Dendritic cell treated with granulocyte-macrophage colony-stimulating factor and Interleukin-4, amounts not matched to agents 40 ng/mL and 50 ng/mL, for 4 days (primary cell): ENCODE measurements at regions of chr9 and their contacts with region 1.

Region 1: GRCh38 chr9:137590462-137591383 is at the start of gene ZMYND19:
- H3K4me3 Mint-ChIP-seq: peak within 1 kb of the TSS; percentile 100
- H3K27ac Mint-ChIP-seq: peak within 1 kb of the TSS; percentile 94
- H3K4me1 Mint-ChIP-seq: peaks cover 38% of the 10 kb centered on the region
- H3K27me3 Mint-ChIP-seq: no peaks in the 10 kb centered on the region

Region 2: GRCh38 chr9:137551651-137552384 is 38.9 kb before region 1 on chr9 and contains the start of gene MRPL41:
- intact Hi-C with region 1: loop called (anchors 5 kb)
- H3K4me3 Mint-ChIP-seq: peak within 1 kb of the TSS; percentile 85
- H3K27ac Mint-ChIP-seq: peak within 1 kb of the TSS; percentile 85
- H3K4me1 Mint-ChIP-seq: peaks cover 28% of the 10 kb centered on the region
- H3K27me3 Mint-ChIP-seq: peaks cover 3% of the 10 kb centered on the region

Region 3: GRCh38 chr9:137605121-137606004 is 14.6 kb after region 1 on chr9 and contains the start of gene ARRDC1:
- intact Hi-C with region 1: loop called (anchors 1 kb)
- H3K4me3 Mint-ChIP-seq: peak within 1 kb of the TSS; percentile 73
- H3K27ac Mint-ChIP-seq: peak within 1 kb of the TSS; percentile 90
- H3K4me1 Mint-ChIP-seq: peaks cover 65% of the 10 kb centered on the region
- H3K27me3 Mint-ChIP-seq: no peaks in the 10 kb centered on the region

Region 4: GRCh38 chr9:137618105-137619067 is 27.7 kb after region 1 on chr9 and contains the start of gene EHMT1:
- intact Hi-C with region 1: loop called (anchors 1 kb)
- H3K4me3 Mint-ChIP-seq: peak within 1 kb of the TSS; percentile 86
- H3K27ac Mint-ChIP-seq: peak within 1 kb of the TSS; percentile 91
- H3K4me1 Mint-ChIP-seq: peaks cover 51% of the 10 kb centered on the region
- H3K27me3 Mint-ChIP-seq: no peaks in the 10 kb centered on the region

Region 5: GRCh38 chr9:137694967-137695879 is 104.5 kb after region 1 on chr9:
- intact Hi-C with region 1: loop called (anchors 10 kb)
- H3K4me3 Mint-ChIP-seq: no peak overlapping the region
- H3K27ac Mint-ChIP-seq: no peak overlapping the region
- H3K4me1 Mint-ChIP-seq: peaks cover 34% of the 10 kb centered on the region
- H3K27me3 Mint-ChIP-seq: no peaks in the 10 kb centered on the region